Heart left ventricle (tissue), 16 donors: ENCODE measurements at regions of chr12 and their contacts with region 1.

Region 1: GRCh38 chr12:76277480-76277879 is 70.7 kb downstream of the BBS10 start:
- DNase-seq: no peak
- ATAC-seq: no peak
- H3K4me3 ChIP-seq: no peak overlapping the region
- H3K27ac ChIP-seq: no peak overlapping the region
- H3K4me1 ChIP-seq: peaks cover 0 to 7% (median 0%) of the 10 kb centered on the region in 12 donors
- H3K27me3 ChIP-seq: peaks cover 0 to 10% (median 0%) of the 10 kb centered on the region in 9 donors
- CTCF ChIP-seq: no peak
- POLR2A ChIP-seq: no peak

Region 2: DNA sequence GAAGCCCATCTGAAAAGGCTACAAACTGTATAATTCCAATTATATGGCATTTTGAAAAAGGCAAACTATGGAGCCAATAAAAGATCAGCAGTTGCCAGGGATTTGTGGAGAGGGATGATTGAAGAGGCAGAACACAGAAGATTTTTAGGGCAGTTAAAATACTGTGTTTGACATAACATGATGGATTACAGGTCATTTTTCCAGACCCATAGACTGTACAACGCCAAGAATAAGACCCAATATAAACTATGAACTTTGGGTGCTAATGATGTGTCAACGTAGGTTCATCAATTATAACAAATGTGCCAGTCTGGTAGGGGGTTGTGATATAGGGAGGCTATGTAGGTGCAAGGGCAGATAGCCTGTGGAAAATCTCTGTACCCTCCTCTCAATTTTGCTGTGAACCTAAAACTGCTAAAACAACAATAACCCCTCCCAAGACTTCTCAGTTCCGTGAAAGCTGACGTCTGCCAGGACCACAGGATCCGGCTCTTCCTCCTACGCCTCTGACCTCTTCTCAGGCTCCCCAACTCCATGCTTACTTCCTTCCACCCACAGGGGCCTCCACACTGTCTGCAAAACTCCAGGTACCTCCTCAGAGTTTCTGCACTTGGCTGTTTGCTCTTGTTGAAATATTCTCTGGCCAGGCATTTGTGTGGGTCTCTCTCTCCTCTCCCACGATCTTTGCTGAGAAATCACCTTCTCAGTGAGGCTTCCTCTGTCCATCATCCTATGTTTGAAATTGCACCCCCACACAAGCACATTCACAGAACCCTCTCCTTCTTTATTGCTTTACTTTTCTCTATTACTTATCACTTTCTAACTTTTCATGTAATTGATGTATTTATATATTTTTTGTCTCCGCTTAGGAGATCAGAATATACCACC is 60.7 kb before region 1 on chr12:
- intact Hi-C with region 1: no loop called
- DNase-seq: no peak
- ATAC-seq: no peak
- H3K4me3 ChIP-seq: no peak overlapping the region
- H3K27ac ChIP-seq: no peak overlapping the region
- H3K4me1 ChIP-seq: no peaks in the 10 kb centered on the region
- H3K27me3 ChIP-seq: no peaks in the 10 kb centered on the region
- CTCF ChIP-seq: no peak
- POLR2A ChIP-seq: no peak

Region 3: GRCh38 chr12:76337583-76337982 is 60.1 kb after region 1 on chr12:
- intact Hi-C with region 1: loop called in 1 of 10 experiments (anchors 10 kb)
- DNase-seq: no peak
- ATAC-seq: no peak
- H3K4me3 ChIP-seq: no peak overlapping the region
- H3K27ac ChIP-seq: no peak overlapping the region
- H3K4me1 ChIP-seq: peaks cover 0 to 7% (median 0%) of the 10 kb centered on the region in 12 donors
- H3K27me3 ChIP-seq: no peaks in the 10 kb centered on the region
- CTCF ChIP-seq: no peak
- POLR2A ChIP-seq: no peak

Region 4: GRCh38 chr12:76356094-76356493 is 78.6 kb after region 1 on chr12:
- intact Hi-C with region 1: no loop called
- DNase-seq: no peak
- ATAC-seq: no peak
- H3K4me3 ChIP-seq: no peak overlapping the region
- H3K27ac ChIP-seq: no peak overlapping the region
- H3K4me1 ChIP-seq: no peaks in the 10 kb centered on the region
- H3K27me3 ChIP-seq: no peaks in the 10 kb centered on the region
- CTCF ChIP-seq: no peak
- POLR2A ChIP-seq: no peak

Region 5: GRCh38 chr12:76636121-76636692 is 358.7 kb after region 1 on chr12:
- intact Hi-C with region 1: no loop called
- DNase-seq: no peak
- ATAC-seq: no peak
- H3K4me3 ChIP-seq: no peak overlapping the region
- H3K27ac ChIP-seq: no peak overlapping the region
- H3K4me1 ChIP-seq: peaks cover 0 to 15% (median 0%) of the 10 kb centered on the region in 12 donors
- H3K27me3 ChIP-seq: no peaks in the 10 kb centered on the region
- CTCF ChIP-seq: no peak
- POLR2A ChIP-seq: no peak